Sciatic nerve (tissue), 2 donors: ENCODE measurements at regions of chr2 and their contacts with region 1.

Region 1: GRCh38 chr2:56474412-56475158 is 290.8 kb downstream of the CCDC85A start:
- DNase-seq: no peak
- ATAC-seq: peak; percentile 13

Region 2: GRCh38 chr2:56540916-56541315 is 66.3 kb after region 1 on chr2:
- intact Hi-C with region 1: loop called (anchors 2 kb)
- DNase-seq: no peak
- ATAC-seq: no peak